ENCODE measurements at regions of chr10 and their contacts with region 1.

Region 1: GRCh38 chr10:123994417-123995081 is 98.8 kb downstream of the CHST15 start:
- DNase-seq: peak; percentile 86 to 91
- ATAC-seq: peak; percentile 83 to 90 (median 86)
- H3K4me3 ChIP-seq: peak overlapping the region; percentile 35
- H3K27ac ChIP-seq: no peak overlapping the region
- H3K4me1 ChIP-seq: peaks cover 6% of the 10 kb centered on the region
- H3K27me3 ChIP-seq: peaks cover 0 to 36% (median 5%) of the 10 kb centered on the region in 3 donors
- CTCF ChIP-seq: peak; percentile 100

Region 2: DNA sequence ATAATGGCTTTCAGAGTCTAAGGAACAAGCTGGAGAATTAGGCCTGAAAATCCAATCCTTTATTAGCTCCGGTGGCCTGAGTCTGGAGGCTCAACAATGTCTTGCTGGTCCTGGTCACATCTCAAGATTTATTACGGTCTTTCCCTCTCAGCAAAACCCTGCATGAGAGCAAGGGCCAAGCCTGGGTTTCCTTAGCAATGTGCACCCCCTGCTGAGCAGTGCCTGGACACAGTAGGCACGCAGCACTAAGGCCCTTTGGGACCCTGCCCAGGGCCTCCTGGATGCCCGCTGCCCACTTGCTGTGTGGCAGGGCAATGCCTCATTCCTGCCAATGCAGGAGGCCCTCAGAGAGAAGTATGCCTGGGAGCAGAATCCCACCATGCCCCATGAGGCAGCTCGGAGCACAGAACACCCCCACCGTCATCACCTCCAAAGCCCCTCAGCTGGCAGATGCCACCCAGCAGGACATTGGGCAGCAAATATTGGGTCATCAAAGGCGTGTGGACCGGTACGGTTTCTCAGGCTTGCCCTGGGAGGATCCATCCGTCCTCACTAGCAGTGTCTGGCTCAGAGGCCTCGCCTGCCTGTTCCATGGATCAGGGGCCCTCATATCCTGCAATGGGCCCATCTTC is 267.8 kb after region 1 on chr10:
- intact Hi-C with region 1: loop called (anchors 2 to 5 kb)
- DNase-seq: no peak
- ATAC-seq: peak; percentile 30 to 86 (median 72)
- H3K4me3 ChIP-seq: no peak overlapping the region
- H3K27ac ChIP-seq: no peak overlapping the region
- H3K4me1 ChIP-seq: no peaks in the 10 kb centered on the region
- H3K27me3 ChIP-seq: no peaks in the 10 kb centered on the region
- CTCF ChIP-seq: peak; percentile 24

Region 3: GRCh38 chr10:124388823-124389612 is 394.5 kb after region 1 on chr10:
- intact Hi-C with region 1: loop called (anchors 1 to 2 kb)
- DNase-seq: peak; percentile 91 to 95
- ATAC-seq: peak; percentile 98 to 100 (median 100)
- H3K4me3 ChIP-seq: peak overlapping the region; percentile 72
- H3K27ac ChIP-seq: no peak overlapping the region
- H3K4me1 ChIP-seq: no peaks in the 10 kb centered on the region
- H3K27me3 ChIP-seq: no peaks in the 10 kb centered on the region
- CTCF ChIP-seq: peak; percentile 94